ENCODE measurements at regions of chr1 and their contacts with region 1.

Region 1: GRCh38 chr1:202135221-202135721 is 9.3 kb downstream of the ARL8A start:
- DNase-seq: peak; percentile 61
- H3K4me3 Mint-ChIP-seq: no peak overlapping the region
- H3K27ac Mint-ChIP-seq: no peak overlapping the region
- H3K4me1 Mint-ChIP-seq: peaks cover 7% of the 10 kb centered on the region
- H3K27me3 Mint-ChIP-seq: no peaks in the 10 kb centered on the region

Region 2: GRCh38 chr1:201999625-202000238 is 135.5 kb before region 1 on chr1:
- CTCF ChIA-PET with region 1: interaction called, 14 read pairs
- POLR2A ChIA-PET with region 1: no interaction called
- DNase-seq: peak; percentile 31
- H3K4me3 Mint-ChIP-seq: no peak overlapping the region
- H3K27ac Mint-ChIP-seq: no peak overlapping the region
- H3K4me1 Mint-ChIP-seq: no peaks in the 10 kb centered on the region
- H3K27me3 Mint-ChIP-seq: no peaks in the 10 kb centered on the region

Region 3: GRCh38 chr1:202010180-202011028 is 124.9 kb before region 1 on chr1 and contains the start of gene ELF3:
- CTCF ChIA-PET with region 1: interaction called, 12 read pairs
- POLR2A ChIA-PET with region 1: no interaction called
- DNase-seq: no peak
- H3K4me3 Mint-ChIP-seq: no peak within 1 kb of the TSS
- H3K27ac Mint-ChIP-seq: no peak within 1 kb of the TSS
- H3K4me1 Mint-ChIP-seq: no peaks in the 10 kb centered on the region
- H3K27me3 Mint-ChIP-seq: no peaks in the 10 kb centered on the region
- total RNA-seq, gene ELF3: 0.30 to 0.38 TPM

Region 4: GRCh38 chr1:202034683-202035462 is 100.4 kb before region 1 on chr1:
- CTCF ChIA-PET with region 1: no interaction called
- POLR2A ChIA-PET with region 1: no interaction called
- DNase-seq: no peak
- H3K4me3 Mint-ChIP-seq: no peak overlapping the region
- H3K27ac Mint-ChIP-seq: no peak overlapping the region
- H3K4me1 Mint-ChIP-seq: no peaks in the 10 kb centered on the region
- H3K27me3 Mint-ChIP-seq: peaks cover 13% of the 10 kb centered on the region